Dorsolateral prefrontal cortex (tissue), 120 donors: ENCODE measurements at regions of chrX and their contacts with region 1.

Region 1: DNA sequence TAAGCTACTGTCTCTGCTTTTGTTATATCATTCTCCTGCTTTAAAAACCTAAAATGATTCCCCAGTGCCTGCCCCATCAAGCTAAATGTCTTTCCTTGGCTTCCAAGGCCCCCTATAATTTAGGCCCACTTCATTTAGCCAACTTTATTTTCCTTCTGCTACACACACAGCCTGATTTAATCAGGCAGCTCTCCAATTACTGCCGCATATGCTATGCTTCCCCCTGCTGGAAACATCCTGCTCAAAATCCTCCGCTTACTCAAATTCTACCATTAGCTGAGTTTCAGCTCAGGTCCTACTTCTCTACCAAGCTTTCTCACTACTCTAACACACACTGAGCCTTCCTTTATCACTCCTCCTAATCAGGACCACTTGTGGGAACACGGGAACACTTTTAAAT is 17.0 kb downstream of the LAMP2 start:
- DNase-seq: peak in 1 of 10 donors; percentile 21
- H3K4me3 ChIP-seq: peak overlapping the region in 2 of 59 donors; percentile 2 to 4
- H3K27ac ChIP-seq: peak overlapping the region in 6 of 59 donors; percentile 4 to 39 (median 26)
- H3K27me3 ChIP-seq: peaks cover 0 to 44% (median 5%) of the 10 kb centered on the region in 45 donors
- CTCF ChIP-seq: peak in 54 of 56 donors; percentile 22 to 69 (median 46)

Region 2: DNA sequence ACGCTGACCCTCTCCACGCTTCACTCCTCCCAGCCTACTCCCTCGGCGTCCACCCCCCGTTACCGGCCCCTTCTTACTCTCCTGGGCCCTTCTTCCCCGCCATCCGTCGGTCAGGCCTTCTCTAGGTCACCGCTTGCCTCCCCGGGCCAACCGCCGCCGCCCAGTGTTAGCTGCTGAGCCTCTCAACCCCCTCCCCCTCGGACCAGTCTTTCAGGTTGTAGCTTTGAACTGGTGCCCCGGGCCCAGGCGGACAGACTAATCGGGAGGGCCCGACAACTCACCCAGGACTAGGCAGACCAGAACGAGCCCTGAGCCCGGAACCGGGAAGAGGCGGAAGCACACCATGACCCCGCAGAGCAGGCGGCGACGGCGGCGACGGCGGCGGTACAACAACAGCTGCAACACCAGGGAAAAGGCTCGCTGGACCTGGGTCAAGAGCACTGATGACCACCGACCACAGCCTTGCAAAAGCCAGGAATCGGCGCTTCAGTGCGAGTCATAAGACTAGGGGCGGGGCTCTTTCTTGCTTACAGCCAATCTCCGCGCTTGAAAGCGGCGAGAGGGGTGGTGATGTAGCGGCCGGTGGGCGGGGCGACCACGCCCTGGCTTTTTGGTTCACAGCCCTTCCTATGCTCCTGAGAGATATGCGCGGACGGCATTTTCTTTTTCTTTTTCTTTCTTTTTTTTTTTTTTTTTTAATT is 16.8 kb after region 1 on chrX and contains the start of gene LAMP2:
- intact Hi-C with region 1: loop called in 1 of 2 experiments (anchors 1 kb)
- DNase-seq: peak; percentile 82 to 94 (median 92)
- H3K4me3 ChIP-seq: peak within 1 kb of the TSS; percentile 31 to 84 (median 71)
- H3K27ac ChIP-seq: peak within 1 kb of the TSS in 58 of 59 donors; percentile 43 to 95 (median 89)
- H3K27me3 ChIP-seq: peaks cover 0 to 25% (median 0%) of the 10 kb centered on the region in 45 donors
- CTCF ChIP-seq: peak in 3 of 56 donors; percentile 8 to 11 (median 9)
- total RNA-seq, gene LAMP2: 107 to 706 (median 222) TPM

Region 3: DNA sequence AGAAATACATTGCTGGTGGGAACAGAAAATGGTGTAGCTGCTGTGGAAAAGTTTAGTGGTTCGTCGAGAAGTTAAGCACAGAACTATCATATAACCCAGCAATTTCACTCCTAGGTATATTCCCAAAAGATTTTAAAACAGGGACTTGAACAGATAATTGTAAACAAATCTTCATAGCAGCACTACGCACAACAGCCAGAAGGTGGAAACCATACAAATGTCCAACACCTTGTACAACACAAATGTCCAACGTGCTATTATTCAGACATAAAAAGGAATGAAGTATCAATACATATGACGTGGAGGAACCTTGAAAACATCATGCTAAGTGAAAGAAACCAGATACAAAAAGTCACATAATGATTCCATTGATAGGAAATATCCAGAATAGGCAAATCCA is 70.7 kb after region 1 on chrX:
- intact Hi-C with region 1: no loop called
- DNase-seq: no peak
- H3K4me3 ChIP-seq: no peak overlapping the region
- H3K27ac ChIP-seq: no peak overlapping the region
- H3K27me3 ChIP-seq: peaks cover 0 to 9% (median 0%) of the 10 kb centered on the region in 45 donors
- CTCF ChIP-seq: no peak